CD4-positive, alpha-beta T cell (primary cell): ENCODE measurements at regions of chr12 and their contacts with region 1.

Region 1: DNA sequence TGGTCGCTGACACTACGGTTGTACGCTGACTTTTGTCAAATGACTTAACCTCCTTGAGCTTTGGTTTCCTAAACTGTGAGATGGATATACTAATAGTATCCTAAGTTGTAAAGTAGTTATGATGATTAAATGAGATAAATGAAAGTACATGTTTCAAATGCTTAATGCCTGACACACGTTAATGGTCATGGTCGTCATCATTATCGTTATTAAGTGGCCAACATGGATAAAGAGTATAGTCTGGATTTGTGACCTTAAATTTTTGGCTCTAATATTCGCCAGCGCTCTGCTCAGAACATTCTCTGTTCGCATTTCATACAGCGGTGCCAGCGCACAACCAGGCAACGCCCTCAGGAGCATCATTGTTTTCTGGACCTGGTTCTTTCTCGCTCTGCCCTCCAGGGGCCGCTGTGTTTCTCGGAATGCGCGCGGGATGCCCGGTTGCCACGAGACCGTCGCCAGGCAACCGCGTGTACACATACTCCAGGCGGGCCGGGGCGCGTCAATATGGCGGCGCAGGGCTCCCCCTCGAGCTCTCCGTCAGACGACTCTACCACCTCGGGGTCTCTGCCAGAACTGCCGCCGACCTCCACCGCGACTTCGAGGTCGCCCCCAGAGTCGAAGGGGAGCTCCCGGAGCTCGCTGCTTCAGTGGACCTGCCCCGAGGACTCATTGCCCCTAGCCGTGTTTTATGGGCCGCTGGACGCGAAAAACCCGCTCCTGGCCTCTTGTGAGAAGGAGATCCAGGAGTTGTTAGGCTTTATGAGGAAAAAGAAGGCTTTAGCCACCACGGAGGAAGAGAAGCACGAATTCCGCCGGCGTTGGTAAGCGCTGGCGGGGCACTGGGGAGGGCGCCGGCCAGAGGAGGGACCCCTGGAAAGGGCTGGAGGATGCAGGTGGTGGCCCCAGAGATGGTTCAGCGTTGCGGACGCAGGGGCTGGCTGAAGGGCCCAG is at the start of gene CFAP54:
- DNase-seq: peak; percentile 91 to 98 (median 94)
- ATAC-seq: peak; percentile 85
- H3K4me3 ChIP-seq: peak within 1 kb of the TSS; percentile 68
- H3K4me3 Mint-ChIP-seq: peak within 1 kb of the TSS; percentile 90
- H3K27ac ChIP-seq: no peak within 1 kb of the TSS
- H3K27ac Mint-ChIP-seq: peak within 1 kb of the TSS; percentile 80
- H3K4me1 ChIP-seq: peaks cover 28% of the 10 kb centered on the region
- H3K4me1 Mint-ChIP-seq: peaks cover 16% of the 10 kb centered on the region
- H3K27me3 ChIP-seq: no peaks in the 10 kb centered on the region
- H3K27me3 Mint-ChIP-seq: peaks cover 6% of the 10 kb centered on the region
- CTCF ChIP-seq: peak; percentile 80
- total RNA-seq, gene CFAP54: 0.20 to 0.22 TPM

Region 2: GRCh38 chr12:96194971-96195844 is 294.2 kb before region 1 on chr12:
- CTCF ChIA-PET with region 1: no interaction called
- POLR2A ChIA-PET with region 1: no interaction called
- intact Hi-C with region 1: loop called in 1 of 2 experiments (anchors 5 kb)
- DNase-seq: peak; percentile 47 to 95 (median 69)
- ATAC-seq: peak; percentile 72
- H3K4me3 ChIP-seq: peak overlapping the region; percentile 96
- H3K4me3 Mint-ChIP-seq: peak overlapping the region; percentile 96
- H3K27ac ChIP-seq: peak overlapping the region; percentile 85 to 98
- H3K27ac Mint-ChIP-seq: peak overlapping the region; percentile 97
- H3K4me1 ChIP-seq: peaks cover 33% of the 10 kb centered on the region
- H3K4me1 Mint-ChIP-seq: peaks cover 62% of the 10 kb centered on the region
- H3K27me3 ChIP-seq: no peaks in the 10 kb centered on the region
- H3K27me3 Mint-ChIP-seq: no peaks in the 10 kb centered on the region
- CTCF ChIP-seq: no peak

Region 3: DNA sequence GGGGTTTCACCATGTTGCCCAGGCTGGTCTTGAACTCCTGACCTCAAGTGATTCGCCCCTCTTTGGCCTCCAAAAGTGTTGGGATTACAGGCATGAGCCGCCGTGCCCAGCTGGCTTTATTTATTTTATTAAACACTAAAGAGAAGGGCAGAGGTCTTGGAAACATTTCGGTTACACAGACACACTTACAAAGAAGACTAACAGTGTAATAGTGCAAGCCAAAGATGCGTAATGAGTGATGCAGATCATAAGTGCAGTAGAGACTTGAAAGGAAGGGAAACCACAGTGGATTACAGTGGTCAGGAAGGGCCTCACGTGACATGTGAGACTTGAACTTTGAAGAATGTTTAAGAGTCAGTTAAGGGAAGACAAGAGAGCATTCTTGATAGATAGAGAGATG is 55.3 kb before region 1 on chr12:
- CTCF ChIA-PET with region 1: no interaction called
- POLR2A ChIA-PET with region 1: no interaction called
- intact Hi-C with region 1: loop called in 1 of 2 experiments (anchors 1 kb)
- DNase-seq: peak; percentile 37 to 95 (median 57)
- ATAC-seq: peak; percentile 98
- H3K4me3 ChIP-seq: peak overlapping the region; percentile 6
- H3K4me3 Mint-ChIP-seq: peak overlapping the region; percentile 52
- H3K27ac ChIP-seq: peak overlapping the region; percentile 50 to 73
- H3K27ac Mint-ChIP-seq: peak overlapping the region; percentile 75
- H3K4me1 ChIP-seq: peaks cover 40% of the 10 kb centered on the region
- H3K4me1 Mint-ChIP-seq: peaks cover 26% of the 10 kb centered on the region
- H3K27me3 ChIP-seq: no peaks in the 10 kb centered on the region
- H3K27me3 Mint-ChIP-seq: no peaks in the 10 kb centered on the region
- CTCF ChIP-seq: no peak

Region 4: DNA sequence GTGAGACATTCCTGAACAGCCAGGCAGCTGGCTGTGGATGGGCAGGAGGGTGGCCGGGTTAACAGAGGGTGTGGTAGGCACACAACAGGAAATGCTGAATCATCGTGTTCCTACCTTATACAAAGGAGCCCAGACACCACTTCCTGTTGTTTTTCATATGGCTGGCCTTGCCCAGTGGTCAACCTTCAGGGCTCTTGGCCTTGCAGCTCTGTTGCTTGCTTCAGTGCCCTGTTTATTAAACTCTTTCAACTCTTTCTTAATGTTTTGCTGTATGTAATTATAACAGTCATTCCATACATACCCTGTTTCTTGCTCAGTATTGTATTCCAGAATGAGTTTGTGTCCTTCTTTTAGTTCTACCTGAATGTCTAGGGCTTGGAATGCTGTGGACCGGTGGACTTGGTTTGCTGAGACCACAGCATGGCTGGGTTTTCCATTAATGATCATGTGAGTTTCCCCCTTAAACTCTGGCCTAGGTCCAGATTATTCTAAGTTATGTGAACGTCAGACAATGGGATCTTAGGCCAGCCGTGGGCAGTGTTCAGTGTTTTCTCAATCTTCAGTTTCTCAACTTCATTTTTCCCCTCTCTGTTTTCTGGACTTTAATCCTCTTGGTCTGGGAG is 11.9 kb after region 1 on chr12:
- CTCF ChIA-PET with region 1: interaction called, 16 read pairs
- POLR2A ChIA-PET with region 1: interaction called, 5 read pairs
- intact Hi-C with region 1: no loop called
- DNase-seq: peak in 11 of 14 experiments; percentile 17 to 83 (median 41)
- ATAC-seq: peak; percentile 82
- H3K4me3 ChIP-seq: no peak overlapping the region
- H3K4me3 Mint-ChIP-seq: peak overlapping the region; percentile 44
- H3K27ac ChIP-seq: peak overlapping the region in 1 of 2 donors; percentile 62
- H3K27ac Mint-ChIP-seq: peak overlapping the region; percentile 85
- H3K4me1 ChIP-seq: peaks cover 18% of the 10 kb centered on the region
- H3K4me1 Mint-ChIP-seq: peaks cover 53% of the 10 kb centered on the region
- H3K27me3 ChIP-seq: no peaks in the 10 kb centered on the region
- H3K27me3 Mint-ChIP-seq: no peaks in the 10 kb centered on the region
- CTCF ChIP-seq: no peak